ENCODE measurements at regions of chr5 and their contacts with region 1.

Region 1: DNA sequence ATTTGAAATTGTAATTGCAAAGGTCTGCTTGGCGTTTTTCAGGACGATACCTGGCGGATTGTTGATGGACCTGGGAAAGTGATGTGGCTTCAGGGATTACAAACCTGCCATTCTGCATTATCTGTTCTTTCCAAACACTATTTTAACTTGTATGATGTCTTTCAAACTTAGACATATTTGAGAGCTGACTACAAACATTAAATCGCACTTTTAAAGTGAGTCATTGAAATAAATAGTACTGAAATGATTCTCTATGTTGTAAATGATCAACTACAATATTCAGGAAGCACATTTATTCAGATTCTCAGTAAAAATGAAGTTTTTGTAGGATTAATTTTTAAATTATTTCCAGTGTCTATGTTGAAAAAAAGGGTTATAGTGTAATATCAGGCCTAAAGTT is 32.3 kb upstream of the TMEM171 start:
- DNase-seq: no peak
- ATAC-seq: no peak
- H3K4me3 ChIP-seq: no peak overlapping the region
- H3K27ac ChIP-seq: no peak overlapping the region
- H3K4me1 ChIP-seq: no peaks in the 10 kb centered on the region
- H3K27me3 ChIP-seq: no peaks in the 10 kb centered on the region
- CTCF ChIP-seq: no peak

Region 2: DNA sequence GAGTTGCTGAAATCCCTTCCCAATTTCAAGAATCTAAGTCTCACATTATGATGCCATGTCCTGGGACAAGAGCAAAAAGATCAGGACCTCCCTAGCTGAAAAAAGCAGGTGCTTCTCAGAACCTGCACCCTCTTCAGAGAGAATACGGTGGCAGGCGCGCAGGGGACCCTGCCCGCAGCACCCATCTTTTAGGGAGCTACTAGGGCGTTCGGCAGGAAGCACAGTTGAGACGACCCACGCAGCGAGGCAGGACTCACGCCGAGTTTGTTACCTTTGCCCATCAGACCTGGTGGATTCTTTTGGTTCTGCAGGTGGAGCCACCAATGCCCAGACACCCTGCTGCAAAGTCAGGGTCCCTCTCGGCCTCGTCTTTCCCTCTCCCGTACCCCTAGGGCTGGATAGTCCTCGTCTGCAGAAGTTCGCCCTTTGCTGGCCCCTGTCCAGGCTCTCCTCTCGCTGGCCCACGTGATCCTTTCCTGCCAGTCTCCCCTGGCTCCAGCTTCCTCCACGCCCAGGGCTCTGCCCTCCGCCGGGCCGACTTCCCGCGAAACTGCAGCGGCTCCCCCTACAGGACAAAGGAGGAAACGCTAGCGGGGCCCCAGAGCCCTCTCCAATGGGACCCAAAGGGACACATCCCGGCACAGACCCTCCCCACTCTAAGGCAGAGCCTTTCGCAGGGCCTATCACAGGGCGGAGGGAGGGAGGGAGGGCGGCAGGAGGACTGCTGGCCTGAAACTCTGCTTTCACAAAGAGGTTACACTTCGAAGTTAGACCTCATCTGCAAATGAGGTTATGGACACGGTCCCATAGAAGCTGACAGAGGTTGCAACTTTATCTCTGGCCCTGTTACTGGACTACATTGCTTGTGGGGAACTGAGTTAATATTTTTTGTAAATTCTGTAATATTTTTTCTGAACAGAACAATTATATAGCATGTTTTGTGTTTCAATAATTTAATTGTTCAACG is 113.8 kb after region 1 on chr5:
- intact Hi-C with region 1: loop called (anchors 10 kb)
- DNase-seq: peak; percentile 90
- ATAC-seq: peak; percentile 98
- H3K4me3 ChIP-seq: no peak overlapping the region
- H3K27ac ChIP-seq: no peak overlapping the region
- H3K4me1 ChIP-seq: no peaks in the 10 kb centered on the region
- H3K27me3 ChIP-seq: peaks cover 28% of the 10 kb centered on the region
- CTCF ChIP-seq: peak; percentile 78

Region 3: DNA sequence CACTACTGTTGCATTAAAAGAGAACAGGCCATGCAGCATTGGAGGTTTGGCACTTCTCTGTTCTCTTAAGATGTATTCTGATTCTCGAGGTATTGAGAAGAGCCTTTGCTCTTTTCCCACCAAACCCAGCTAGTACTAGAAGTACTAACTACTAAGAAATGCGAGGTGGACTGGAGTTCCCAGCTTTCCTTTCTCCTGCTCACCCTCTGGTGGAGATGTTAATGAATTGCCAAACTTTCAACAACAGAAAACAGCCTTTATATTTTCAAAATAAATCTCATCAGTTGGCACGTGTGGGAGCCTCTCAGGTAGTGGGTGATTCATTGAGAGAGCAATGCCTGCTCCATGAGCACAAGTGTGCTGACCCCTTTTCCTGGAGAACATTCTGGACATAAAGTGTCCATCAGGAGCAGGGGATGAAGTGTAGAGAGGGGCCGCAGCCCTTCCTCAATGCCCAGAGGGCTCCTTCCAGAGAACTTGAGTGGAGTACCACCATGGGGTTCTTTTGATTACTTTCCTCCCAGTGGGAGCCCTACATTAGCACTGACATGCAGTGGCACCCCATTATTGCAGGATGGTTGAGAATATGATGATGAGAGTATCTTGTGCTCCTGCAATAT is 130.6 kb after region 1 on chr5:
- intact Hi-C with region 1: no loop called
- DNase-seq: no peak
- ATAC-seq: no peak
- H3K4me3 ChIP-seq: no peak overlapping the region
- H3K27ac ChIP-seq: no peak overlapping the region
- H3K4me1 ChIP-seq: peaks cover 5% of the 10 kb centered on the region
- H3K27me3 ChIP-seq: peaks cover 93% of the 10 kb centered on the region
- CTCF ChIP-seq: no peak